ENCODE measurements at regions of chr4 and their contacts with region 1.

Region 1: DNA sequence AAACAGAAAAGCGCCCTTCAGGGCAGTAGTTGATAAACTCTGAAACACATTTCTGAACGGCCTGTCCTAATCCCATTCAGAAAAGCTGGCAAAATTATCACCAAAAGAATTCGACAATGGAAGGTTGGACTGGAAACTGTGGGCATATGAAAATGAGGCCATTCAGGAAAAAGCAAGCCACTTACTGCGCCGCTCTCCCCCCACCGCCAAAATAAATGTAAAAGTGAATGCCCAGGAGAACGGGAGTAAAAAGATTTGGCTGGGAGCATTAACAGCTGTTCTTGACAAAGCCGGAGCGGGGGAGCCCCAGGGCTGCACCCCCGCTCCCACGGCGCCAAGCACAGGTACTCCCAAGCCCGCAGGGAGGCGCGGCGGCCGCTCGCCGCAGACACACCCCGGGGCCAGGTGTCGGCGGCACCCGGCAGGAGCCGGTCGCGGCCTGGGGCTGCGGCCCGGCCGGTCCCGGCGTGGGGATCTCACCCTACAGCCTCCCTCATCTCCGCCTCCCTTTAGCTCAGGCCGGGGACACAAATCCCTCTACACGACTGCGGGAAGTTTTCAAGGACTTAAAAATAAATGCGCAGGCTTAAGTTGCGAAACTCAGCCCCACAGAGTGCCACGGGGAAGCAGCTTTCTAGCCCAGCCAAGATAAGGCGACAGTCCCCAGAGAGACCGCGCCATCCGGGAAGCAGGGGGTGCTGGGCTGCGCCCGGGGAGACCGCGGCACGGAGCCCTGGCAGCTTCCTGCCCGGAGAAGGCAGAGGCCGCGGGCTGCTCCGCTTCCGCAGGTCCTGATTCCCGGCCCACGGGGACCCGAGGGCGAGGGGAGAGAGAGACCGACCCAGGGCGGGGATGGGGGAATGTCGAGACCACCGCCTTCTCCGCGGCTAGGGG is 593 bp downstream of the SH3RF1 start:
- DNase-seq: peak; percentile 45
- H3K4me3 Mint-ChIP-seq: peak overlapping the region; percentile 92
- H3K27ac Mint-ChIP-seq: peak overlapping the region; percentile 87
- H3K4me1 Mint-ChIP-seq: peaks cover 27% of the 10 kb centered on the region
- H3K27me3 Mint-ChIP-seq: no peaks in the 10 kb centered on the region
- CTCF ChIP-seq: no peak

Region 2: DNA sequence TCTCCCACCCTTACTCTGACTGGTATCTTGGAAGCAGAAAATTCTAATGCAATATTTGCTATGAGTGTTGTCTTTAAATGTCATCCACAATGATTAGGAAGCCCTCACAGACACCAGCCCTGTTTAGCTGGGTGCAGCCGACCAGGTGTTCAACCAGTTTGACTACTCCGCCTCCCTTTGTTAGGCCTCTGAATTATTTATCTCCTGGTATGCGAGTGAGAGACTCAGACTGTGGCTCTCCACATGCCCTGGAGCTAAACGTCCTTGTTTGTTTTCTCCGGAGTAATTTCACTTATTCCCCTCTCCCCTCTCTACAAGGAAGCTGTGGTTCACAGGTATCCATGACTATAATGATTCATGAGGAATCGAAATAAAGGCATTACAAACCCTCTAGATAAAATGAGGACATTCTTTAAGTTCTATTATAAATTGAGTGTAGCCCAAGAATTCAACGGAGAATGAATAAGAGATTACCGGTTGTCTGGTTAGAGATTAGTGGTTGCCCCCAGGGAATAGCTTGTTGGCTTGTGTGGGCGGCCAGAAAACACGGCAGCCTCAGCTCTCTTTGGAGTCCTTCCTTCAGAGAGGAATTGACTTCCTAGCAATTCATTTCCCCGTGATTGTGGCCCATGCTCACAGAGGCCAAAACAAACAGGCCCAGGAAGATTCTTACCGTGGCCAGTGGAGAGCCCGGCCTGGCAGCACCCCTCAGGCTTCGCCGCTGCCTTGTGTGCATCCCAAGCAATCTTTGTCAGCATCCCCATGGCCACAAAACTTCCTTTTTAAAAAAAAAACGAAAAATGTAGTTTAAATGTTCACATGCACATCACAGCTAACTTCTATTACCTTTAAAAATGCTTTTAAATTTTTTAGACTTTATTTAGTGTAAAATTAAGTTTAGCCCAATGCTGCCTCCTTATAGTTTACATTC is 199.9 kb before region 1 on chr4:
- CTCF ChIA-PET with region 1: no interaction called
- intact Hi-C with region 1: loop called (anchors 5 kb)
- DNase-seq: peak; percentile 84
- H3K4me3 Mint-ChIP-seq: peak overlapping the region; percentile 54
- H3K27ac Mint-ChIP-seq: peak overlapping the region; percentile 97
- H3K4me1 Mint-ChIP-seq: peaks cover 30% of the 10 kb centered on the region
- H3K27me3 Mint-ChIP-seq: no peaks in the 10 kb centered on the region
- CTCF ChIP-seq: no peak

Region 3: GRCh38 chr4:169205075-169205743 is 65.0 kb before region 1 on chr4:
- CTCF ChIA-PET with region 1: no interaction called
- intact Hi-C with region 1: loop called (anchors 2 kb)
- DNase-seq: no peak
- H3K4me3 Mint-ChIP-seq: no peak overlapping the region
- H3K27ac Mint-ChIP-seq: peak overlapping the region; percentile 53
- H3K4me1 Mint-ChIP-seq: peaks cover 50% of the 10 kb centered on the region
- H3K27me3 Mint-ChIP-seq: no peaks in the 10 kb centered on the region
- CTCF ChIP-seq: no peak

Region 4: DNA sequence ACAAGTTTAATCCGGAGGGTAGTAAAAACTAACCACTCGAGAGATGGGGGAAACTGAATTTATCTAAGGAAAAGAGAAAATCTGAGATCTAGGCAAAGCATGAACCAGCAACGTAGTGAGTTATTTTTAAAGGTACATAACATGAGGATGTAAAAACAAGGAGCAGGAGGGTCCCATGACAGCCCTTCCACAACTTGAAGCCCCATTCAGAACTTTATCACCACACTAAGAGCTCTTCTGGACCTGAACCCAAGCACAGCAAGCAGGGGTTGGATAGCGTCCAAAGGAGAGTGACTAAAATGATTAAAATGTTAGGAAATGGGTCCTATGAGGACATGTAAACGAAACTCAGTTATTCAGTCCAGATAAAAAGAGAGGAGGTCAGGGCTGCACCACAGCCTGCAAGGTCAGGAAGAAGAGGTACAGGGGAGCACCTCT is 15.6 kb before region 1 on chr4:
- CTCF ChIA-PET with region 1: interaction called, 4 read pairs
- intact Hi-C with region 1: loop called (anchors 2 kb)
- DNase-seq: no peak
- H3K4me3 Mint-ChIP-seq: peak overlapping the region; percentile 68
- H3K27ac Mint-ChIP-seq: peak overlapping the region; percentile 94
- H3K4me1 Mint-ChIP-seq: peaks cover 70% of the 10 kb centered on the region
- H3K27me3 Mint-ChIP-seq: no peaks in the 10 kb centered on the region
- CTCF ChIP-seq: no peak

Region 5: DNA sequence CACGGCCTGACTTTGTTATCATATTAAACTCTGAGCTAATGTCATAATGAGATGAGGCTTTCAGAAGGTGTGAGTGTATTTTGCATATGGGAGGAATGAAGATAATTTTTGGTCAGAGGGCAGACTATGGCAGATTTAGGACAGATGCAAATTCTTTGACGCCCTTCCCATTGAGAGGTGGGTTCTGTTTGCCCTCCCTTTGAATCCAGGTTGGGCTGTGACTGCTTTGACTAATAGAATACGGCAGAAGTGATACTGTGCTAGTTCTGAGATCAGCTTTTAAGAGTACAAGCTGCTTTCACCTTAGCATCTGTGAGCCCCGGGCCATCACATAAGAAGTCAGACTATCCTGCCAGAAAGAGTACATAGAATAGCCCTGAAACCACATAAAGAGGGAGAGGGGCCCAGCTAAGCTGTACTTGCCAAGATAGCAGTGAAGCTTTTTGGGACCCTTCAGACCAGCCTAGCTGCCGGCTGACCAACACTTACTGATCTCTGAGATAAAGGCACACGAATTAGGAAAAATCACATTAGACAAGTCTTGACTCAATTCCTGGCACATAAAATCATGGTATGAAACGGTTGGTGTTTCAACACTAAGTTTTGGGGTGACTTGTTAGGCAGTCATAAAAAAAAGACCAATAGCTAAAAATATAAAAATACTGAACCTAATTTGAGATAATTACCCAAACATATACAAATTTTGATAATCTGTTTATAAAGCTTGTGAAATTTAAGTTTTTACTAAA is 167.3 kb after region 1 on chr4:
- CTCF ChIA-PET with region 1: no interaction called
- intact Hi-C with region 1: no loop called
- DNase-seq: no peak
- H3K4me3 Mint-ChIP-seq: no peak overlapping the region
- H3K27ac Mint-ChIP-seq: no peak overlapping the region
- H3K4me1 Mint-ChIP-seq: peaks cover 25% of the 10 kb centered on the region
- H3K27me3 Mint-ChIP-seq: no peaks in the 10 kb centered on the region
- CTCF ChIP-seq: no peak

Region 6: GRCh38 chr4:169604131-169604900 is 334.2 kb after region 1 on chr4:
- CTCF ChIA-PET with region 1: no interaction called
- intact Hi-C with region 1: no loop called
- DNase-seq: no peak
- H3K4me3 Mint-ChIP-seq: no peak overlapping the region
- H3K27ac Mint-ChIP-seq: no peak overlapping the region
- H3K4me1 Mint-ChIP-seq: peaks cover 7% of the 10 kb centered on the region
- H3K27me3 Mint-ChIP-seq: no peaks in the 10 kb centered on the region
- CTCF ChIP-seq: no peak